ENCODE measurements at regions of chr11 and their contacts with region 1.

Region 1: GRCh38 chr11:120511116-120511819 is at the start of gene GRIK4:
- DNase-seq: peak; percentile 96
- CTCF ChIP-seq: peak; percentile 97

Region 2: GRCh38 chr11:121112498-121113455 is 601.5 kb after region 1 on chr11:
- in situ Hi-C with region 1: loop called (anchors 25 kb)
- DNase-seq: peak; percentile 76
- CTCF ChIP-seq: peak; percentile 35

Region 3: GRCh38 chr11:121194731-121195596 is 683.7 kb after region 1 on chr11:
- in situ Hi-C with region 1: loop called (anchors 25 kb)
- DNase-seq: peak; percentile 77
- CTCF ChIP-seq: peak; percentile 72

Region 4: GRCh38 chr11:121613724-121614123 is 1102.5 kb after region 1 on chr11:
- in situ Hi-C with region 1: no loop called
- DNase-seq: no peak
- CTCF ChIP-seq: no peak